ENCODE measurements at regions of chr2 and their contacts with region 1.

Region 1: DNA sequence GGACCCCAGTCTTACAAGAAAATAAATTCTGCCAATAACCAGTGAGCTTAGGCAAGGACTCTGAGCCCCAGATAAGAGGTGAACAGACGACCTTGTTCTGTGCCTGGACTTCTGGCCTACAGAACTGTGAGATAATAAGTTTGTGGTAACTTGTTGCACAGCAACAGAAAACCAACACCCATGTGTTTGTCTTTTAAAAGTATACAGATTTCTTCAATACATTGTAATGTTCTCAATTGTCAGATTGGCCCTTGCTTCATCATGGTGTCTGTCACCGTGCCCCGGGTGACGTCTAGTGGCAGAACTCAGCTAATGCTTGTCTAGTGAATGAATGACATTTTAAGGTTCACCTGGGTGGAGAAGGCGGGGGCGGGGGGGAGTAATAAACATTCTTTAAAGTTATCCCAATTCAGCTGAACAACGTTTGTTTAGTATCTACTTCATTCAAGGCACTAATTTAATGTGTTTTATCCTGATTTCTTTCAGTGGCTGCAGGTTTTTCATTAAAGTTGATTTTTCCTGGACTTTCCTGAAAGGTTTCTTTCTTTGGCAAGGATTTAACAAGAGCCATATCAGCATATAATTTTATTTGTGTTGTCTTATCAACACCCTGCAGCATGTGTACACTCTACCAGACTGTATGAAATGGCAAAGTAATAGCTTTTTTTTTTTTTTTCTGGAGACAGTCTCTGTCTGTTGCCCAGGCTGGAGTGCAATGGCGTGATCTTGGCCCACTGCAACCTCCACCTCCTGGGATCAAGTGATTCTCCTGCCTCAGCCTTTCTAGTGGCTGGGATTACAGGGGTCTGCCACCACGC is 123.8 kb upstream of the DLX2 start:
- DNase-seq: no peak
- ATAC-seq: peak; percentile 83
- H3K4me3 ChIP-seq: no peak overlapping the region
- H3K27ac ChIP-seq: no peak overlapping the region
- H3K4me1 ChIP-seq: no peaks in the 10 kb centered on the region
- H3K27me3 ChIP-seq: no peaks in the 10 kb centered on the region
- CTCF ChIP-seq: peak; percentile 73

Region 2: DNA sequence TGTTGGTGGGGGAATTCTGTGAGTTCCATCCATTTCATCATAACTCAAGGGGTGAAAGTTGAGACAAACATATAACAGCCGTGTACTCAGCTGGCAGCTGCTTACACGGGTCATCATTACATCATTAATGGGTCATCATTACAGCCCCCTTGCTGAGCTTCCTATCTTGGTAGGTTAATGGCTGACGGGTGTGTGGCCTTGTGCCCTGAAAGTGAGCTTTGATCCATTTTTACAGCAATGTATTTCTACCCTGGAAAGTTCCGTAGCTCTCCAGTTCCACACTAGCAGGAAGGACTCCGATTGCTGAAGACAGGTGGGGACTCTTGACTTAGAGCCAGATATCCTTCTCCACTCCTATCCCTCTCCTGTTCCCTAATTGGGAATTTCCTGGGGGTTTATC is 18.5 kb before region 1 on chr2:
- CTCF ChIA-PET with region 1: interaction called, 21 read pairs
- POLR2A ChIA-PET with region 1: no interaction called
- in situ Hi-C with region 1: no loop called
- intact Hi-C with region 1: no loop called
- DNase-seq: no peak
- ATAC-seq: no peak
- H3K4me3 ChIP-seq: no peak overlapping the region
- H3K27ac ChIP-seq: no peak overlapping the region
- H3K4me1 ChIP-seq: no peaks in the 10 kb centered on the region
- H3K27me3 ChIP-seq: no peaks in the 10 kb centered on the region
- CTCF ChIP-seq: no peak